ENCODE measurements at regions of chr1 and their contacts with region 1.

Region 1: GRCh38 chr1:171781176-171781875 is at the start of gene METTL13:
- DNase-seq: peak; percentile 100
- ATAC-seq: peak; percentile 100
- total RNA-seq, gene METTL13: 18.9 TPM

Region 2: GRCh38 chr1:171654942-171655745 is 126.2 kb before region 1 on chr1:
- intact Hi-C with region 1: loop called (anchors 5 kb)
- DNase-seq: peak; percentile 91
- ATAC-seq: peak; percentile 95

Region 3: GRCh38 chr1:171741872-171742576 is 39.3 kb before region 1 on chr1 and contains the start of gene VAMP4:
- intact Hi-C with region 1: loop called (anchors 1 kb)
- DNase-seq: peak; percentile 95
- ATAC-seq: peak; percentile 91
- total RNA-seq, gene VAMP4: 11.4 TPM